ENCODE measurements at regions of chr3 and their contacts with region 1.

Region 1: DNA sequence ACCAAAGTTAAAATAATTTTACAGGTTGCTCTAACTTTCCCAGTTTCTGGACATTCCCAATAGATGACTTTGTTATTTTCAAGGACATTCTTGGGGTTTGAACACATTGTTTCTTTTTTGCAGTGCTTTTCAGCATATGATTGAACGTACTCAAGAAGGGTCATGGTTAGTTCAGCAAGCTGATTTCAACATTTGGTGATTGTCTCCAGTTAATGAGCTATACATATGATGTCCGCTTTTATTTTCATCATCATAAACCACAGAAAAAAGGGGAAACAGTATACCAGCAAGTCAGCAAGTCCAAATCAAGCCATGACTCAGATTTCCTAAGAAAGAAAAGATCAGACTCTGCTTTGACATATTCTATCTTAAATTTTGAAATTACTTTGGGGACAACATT is 69.4 kb downstream of the B3GALNT1 start:
- DNase-seq: no peak
- ATAC-seq: peak; percentile 46

Region 2: GRCh38 chr3:160697628-160698382 is 337.9 kb before region 1 on chr3:
- intact Hi-C with region 1: no loop called
- DNase-seq: no peak
- ATAC-seq: no peak

Region 3: DNA sequence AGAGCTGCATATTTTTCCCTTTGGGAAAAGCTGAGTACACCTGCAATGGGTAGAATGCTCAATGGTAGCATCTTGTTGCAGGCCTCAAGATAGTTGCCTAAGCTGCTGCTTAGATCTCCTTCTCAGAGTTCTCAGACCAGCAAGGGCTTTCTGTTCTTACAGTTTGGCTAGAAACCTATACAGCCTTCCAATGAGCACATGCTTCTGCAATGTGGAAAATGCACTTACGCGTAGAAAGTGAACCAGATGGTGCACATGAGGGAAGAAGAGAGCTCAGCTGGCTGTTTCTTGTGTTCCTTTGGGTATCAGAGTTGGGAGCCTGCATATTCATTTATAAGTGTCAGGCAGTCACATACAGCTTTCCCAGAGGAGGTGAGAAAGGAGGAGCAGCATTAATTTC is 67.0 kb before region 1 on chr3:
- intact Hi-C with region 1: loop called (anchors 10 kb)
- DNase-seq: no peak
- ATAC-seq: no peak